ENCODE measurements at regions of chr1 and their contacts with region 1.

Region 1: GRCh38 chr1:202315576-202316168 is 26.1 kb downstream of the UBE2T start:
- DNase-seq: peak; percentile 81
- ATAC-seq: peak; percentile 77

Region 2: GRCh38 chr1:202144402-202145067 is 171.1 kb before region 1 on chr1 and contains the start of gene ARL8A:
- intact Hi-C with region 1: no loop called
- DNase-seq: peak; percentile 91
- ATAC-seq: peak; percentile 80
- total RNA-seq, gene ARL8A: 64.6 TPM

Region 3: GRCh38 chr1:202189001-202189790 is 126.5 kb before region 1 on chr1:
- intact Hi-C with region 1: loop called (anchors 1 kb)
- DNase-seq: peak; percentile 85
- ATAC-seq: peak; percentile 45

Region 4: DNA sequence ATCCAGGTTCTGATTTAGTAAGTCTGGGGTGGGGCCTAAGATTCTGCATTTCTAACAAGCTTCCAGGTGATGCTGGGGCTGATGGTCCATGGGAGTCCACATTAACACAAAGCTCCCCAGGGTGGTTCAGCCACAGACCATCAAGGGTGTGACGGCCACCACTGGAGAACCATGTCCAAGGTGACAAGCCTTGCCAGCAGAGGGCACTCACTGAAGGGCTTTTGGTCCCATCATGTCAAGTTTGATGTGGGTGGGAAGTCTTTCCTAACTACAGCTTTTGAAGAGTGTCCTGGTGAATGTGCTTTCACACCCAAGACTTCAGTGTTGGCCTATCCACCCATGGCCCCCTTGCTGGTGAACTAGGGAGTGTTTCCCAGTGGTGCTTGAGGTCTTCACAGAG is 41.1 kb before region 1 on chr1:
- intact Hi-C with region 1: loop called (anchors 1 kb)
- DNase-seq: no peak
- ATAC-seq: no peak

Region 5: GRCh38 chr1:202671122-202671797 is 355.6 kb after region 1 on chr1:
- intact Hi-C with region 1: no loop called
- DNase-seq: no peak
- ATAC-seq: no peak

Region 6: DNA sequence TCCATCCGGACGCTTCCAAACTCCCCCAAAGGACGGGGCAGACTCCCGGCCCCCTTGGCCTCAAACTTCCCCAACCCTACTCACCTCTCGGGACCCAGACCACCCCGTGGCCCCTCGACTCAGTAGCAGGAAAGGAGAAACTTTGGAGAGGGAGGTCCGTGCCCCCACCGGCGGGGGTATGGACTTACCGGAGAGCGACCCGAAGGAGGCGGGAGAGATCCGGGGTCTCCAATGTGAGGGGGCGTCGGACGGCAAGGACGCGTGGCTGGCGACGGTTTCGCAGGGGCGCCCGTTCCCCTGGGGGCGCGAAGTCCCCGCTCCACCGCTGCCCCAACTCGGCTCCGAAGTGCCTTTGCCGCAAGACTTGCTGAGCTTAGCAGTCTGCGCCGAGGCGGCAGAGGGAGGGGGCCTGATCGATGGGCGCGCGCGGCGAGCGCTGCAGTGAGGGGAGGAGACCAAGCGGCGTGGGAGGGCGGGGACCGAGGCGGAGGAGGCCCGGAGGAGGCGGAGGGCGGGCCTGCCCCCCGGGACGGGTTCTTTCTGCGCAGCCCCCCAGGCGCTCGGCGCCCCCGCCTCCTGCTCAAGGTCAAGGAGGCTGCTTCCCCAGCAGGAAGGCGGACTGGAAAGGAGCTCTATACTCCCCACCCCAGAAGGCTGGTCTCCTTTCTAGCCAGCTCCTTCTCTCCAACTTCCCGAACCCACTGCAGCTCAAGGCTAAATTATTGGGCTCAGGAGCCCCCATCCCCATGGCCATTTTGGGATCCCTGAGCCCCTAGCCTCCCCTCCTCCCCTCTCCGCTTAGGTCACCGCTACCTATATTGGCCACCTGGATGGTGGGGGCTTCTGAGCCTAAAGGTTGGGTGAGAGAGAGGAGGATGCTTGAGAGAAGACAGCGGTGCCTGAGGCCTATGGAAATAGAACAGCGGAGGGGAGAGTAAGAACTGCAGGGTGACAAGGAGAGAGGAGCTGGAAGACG is 394.7 kb after region 1 on chr1 and contains the start of gene SYT2:
- intact Hi-C with region 1: loop called (anchors 10 kb)
- DNase-seq: no peak
- ATAC-seq: no peak
- total RNA-seq, gene SYT2: not detected